Activated CD8-positive, alpha-beta T cell treated with anti-CD3 and anti-CD28 coated beads, Interleukin-2, amount 10 ng/mL, durations not matched to agents 7 days and 5 days (primary cell): ENCODE measurements at regions of chr19 and their contacts with region 1.

Region 1: DNA sequence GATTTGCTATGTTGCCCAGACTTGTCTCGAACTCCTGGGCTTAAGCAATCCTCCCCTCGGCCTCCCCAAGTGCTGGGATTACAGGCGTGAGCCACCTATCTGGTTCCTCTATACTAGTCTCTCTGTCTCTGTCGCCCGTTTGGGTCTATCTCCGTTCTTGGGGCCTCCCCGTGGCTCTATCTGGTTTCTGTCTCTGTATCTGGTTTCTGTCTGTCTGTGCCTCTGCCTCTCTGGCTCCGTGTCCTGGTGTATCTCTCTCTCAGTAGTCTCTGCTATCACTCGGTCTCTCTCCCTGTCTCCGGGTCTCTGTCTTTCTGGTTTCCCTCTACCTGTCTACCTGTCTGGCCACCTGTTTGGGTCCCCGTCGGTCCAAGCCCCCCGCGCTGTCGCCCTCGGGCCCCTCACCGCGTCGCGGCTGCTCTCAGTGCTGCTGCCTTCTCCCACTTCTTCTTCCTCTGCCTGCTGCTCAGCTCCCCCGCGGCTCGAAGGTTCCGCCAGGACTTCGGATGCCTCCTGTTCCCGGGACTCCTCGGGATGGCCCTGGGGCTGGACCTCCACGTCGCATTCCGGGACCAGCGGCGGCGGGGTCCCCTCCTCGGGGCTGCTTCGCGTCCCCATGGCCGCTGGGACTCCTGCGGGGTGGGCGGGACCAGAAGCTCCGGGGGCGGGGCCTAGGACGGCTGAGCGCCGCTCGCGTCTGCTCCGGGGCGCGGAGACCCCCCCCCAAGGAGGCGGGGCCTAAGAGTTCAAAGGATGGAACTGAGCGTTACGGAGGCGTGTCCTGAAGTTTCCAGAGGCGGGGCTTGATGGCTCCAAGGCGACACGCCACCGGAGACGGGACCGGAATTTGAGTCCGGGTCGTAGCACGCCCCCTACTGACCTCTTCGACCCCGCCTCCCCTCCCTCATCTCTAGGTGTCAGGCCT is 783 bp downstream of the PHLDB3 start:
- DNase-seq: peak; percentile 98
- ATAC-seq: peak; percentile 95
- H3K4me3 Mint-ChIP-seq: peak overlapping the region; percentile 88
- H3K27ac Mint-ChIP-seq: peak overlapping the region; percentile 97
- H3K4me1 Mint-ChIP-seq: peaks cover 27% of the 10 kb centered on the region
- H3K27me3 Mint-ChIP-seq: no peaks in the 10 kb centered on the region

Region 2: DNA sequence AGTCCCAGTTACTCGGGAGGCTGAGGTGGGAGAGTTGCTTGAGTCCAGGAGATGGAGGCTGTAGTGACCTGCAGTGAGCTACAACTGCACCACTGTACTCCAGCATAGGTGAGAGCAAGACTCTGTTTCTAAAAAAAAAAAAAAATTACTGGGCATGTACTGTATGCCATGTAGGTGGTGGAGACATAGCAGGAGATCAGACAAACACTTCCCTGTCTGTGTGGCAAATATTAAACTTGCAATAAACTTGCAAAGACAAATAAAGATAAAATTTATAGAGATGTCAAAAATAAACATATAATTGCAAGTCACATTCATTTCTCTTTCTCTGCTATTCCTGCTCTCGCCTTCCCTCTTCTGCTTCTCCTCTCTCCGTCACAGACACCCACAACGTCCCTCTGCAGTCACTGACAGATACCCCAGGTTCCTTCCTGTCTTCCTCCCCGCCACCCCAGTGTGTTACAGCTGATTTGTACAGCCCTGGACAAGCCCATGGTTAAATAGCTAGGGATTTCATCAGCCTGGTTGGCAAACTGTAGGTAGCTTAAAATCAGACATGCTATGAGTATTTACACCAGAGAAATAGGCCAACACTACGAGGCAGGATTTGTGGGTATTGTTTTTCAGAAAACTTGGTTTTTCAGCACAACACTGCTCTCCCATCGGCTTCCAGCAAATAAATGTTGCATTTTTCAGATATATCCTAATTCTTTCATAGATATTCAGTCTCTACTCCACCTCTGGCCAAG is 151.6 kb before region 1 on chr19:
- CTCF ChIA-PET with region 1: no interaction called
- POLR2A ChIA-PET with region 1: no interaction called
- DNase-seq: no peak
- ATAC-seq: no peak
- H3K4me3 Mint-ChIP-seq: no peak overlapping the region
- H3K27ac Mint-ChIP-seq: no peak overlapping the region
- H3K4me1 Mint-ChIP-seq: no peaks in the 10 kb centered on the region
- H3K27me3 Mint-ChIP-seq: no peaks in the 10 kb centered on the region

Region 3: GRCh38 chr19:43425567-43426392 is 78.0 kb before region 1 on chr19:
- CTCF ChIA-PET with region 1: interaction called, 10 read pairs
- POLR2A ChIA-PET with region 1: no interaction called
- DNase-seq: no peak
- ATAC-seq: no peak
- H3K4me3 Mint-ChIP-seq: no peak overlapping the region
- H3K27ac Mint-ChIP-seq: no peak overlapping the region
- H3K4me1 Mint-ChIP-seq: peaks cover 4% of the 10 kb centered on the region
- H3K27me3 Mint-ChIP-seq: peaks cover 2% of the 10 kb centered on the region

Region 4: GRCh38 chr19:43454031-43454430 is 49.7 kb before region 1 on chr19:
- CTCF ChIA-PET with region 1: no interaction called
- POLR2A ChIA-PET with region 1: no interaction called
- DNase-seq: no peak
- ATAC-seq: no peak
- H3K4me3 Mint-ChIP-seq: no peak overlapping the region
- H3K27ac Mint-ChIP-seq: no peak overlapping the region
- H3K4me1 Mint-ChIP-seq: peaks cover 15% of the 10 kb centered on the region
- H3K27me3 Mint-ChIP-seq: no peaks in the 10 kb centered on the region